Activated CD4-positive, alpha-beta T cell treated with anti-CD3 and anti-CD28 coated beads, Interleukin-2, amount 10 ng/mL, durations not matched to agents 24 days and 14 days (primary cell): ENCODE measurements at regions of chr18 and their contacts with region 1.

Region 1: GRCh38 chr18:3645384-3646156 is 195.6 kb downstream of the TGIF1 start:
- DNase-seq: no peak
- H3K4me3 Mint-ChIP-seq: no peak overlapping the region
- H3K27ac Mint-ChIP-seq: no peak overlapping the region
- H3K4me1 Mint-ChIP-seq: peaks cover 32% of the 10 kb centered on the region
- H3K27me3 Mint-ChIP-seq: no peaks in the 10 kb centered on the region

Region 2: GRCh38 chr18:3585656-3586509 is 59.7 kb before region 1 on chr18:
- intact Hi-C with region 1: no loop called
- DNase-seq: peak; percentile 90
- H3K4me3 Mint-ChIP-seq: no peak overlapping the region
- H3K27ac Mint-ChIP-seq: peak overlapping the region; percentile 84
- H3K4me1 Mint-ChIP-seq: peaks cover 36% of the 10 kb centered on the region
- H3K27me3 Mint-ChIP-seq: no peaks in the 10 kb centered on the region

Region 3: DNA sequence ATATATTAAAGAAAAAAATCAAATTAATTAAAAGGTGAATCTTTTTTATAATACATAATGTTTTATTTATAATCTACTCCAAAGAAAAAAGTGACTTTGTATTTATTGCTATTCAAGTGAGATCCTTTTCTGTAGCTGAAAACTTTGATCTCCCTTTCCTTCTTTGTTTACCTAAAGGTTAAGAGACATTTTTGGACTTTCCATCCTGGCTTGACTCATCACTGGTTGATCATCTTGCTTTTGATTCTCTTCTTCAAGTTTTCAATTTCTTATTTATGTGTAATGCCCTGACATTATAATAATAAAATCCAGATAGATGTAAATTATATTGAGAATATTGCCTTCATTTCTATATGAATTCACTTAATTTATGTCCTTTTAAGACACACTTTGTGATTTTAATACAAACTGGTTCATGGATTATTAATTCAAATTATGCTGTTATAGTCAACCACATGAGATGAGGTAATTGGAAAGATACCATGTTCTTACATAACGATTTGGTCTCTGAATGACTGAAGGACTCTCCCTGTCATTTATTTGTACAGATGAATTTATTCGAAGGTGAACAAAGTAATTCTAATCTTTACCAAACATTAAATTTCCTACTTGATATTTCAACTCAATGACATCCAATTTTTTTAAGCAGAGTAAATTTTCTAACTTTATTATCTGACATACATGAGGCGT is 11.2 kb before region 1 on chr18:
- intact Hi-C with region 1: loop called (anchors 1 kb)
- DNase-seq: no peak
- H3K4me3 Mint-ChIP-seq: no peak overlapping the region
- H3K27ac Mint-ChIP-seq: peak overlapping the region; percentile 14
- H3K4me1 Mint-ChIP-seq: peaks cover 14% of the 10 kb centered on the region
- H3K27me3 Mint-ChIP-seq: no peaks in the 10 kb centered on the region